Activated naive CD4-positive, alpha-beta T cell treated with anti-CD3 and anti-CD28 coated beads for 36 hours (primary cell): ENCODE measurements at regions of chr13 and their contacts with region 1.

Region 1: GRCh38 chr13:40777166-40777808 is 6.3 kb upstream of the MRPS31 start:
- DNase-seq: peak; percentile 48
- H3K4me3 Mint-ChIP-seq: peak overlapping the region; percentile 77
- H3K27ac Mint-ChIP-seq: peak overlapping the region; percentile 99
- H3K4me1 Mint-ChIP-seq: peaks cover 25% of the 10 kb centered on the region
- H3K27me3 Mint-ChIP-seq: no peaks in the 10 kb centered on the region

Region 2: GRCh38 chr13:39777527-39778061 is 999.7 kb before region 1 on chr13:
- CTCF ChIA-PET with region 1: interaction called, 3 read pairs
- intact Hi-C with region 1: loop called (anchors 2 kb)
- DNase-seq: peak; percentile 70
- H3K4me3 Mint-ChIP-seq: no peak overlapping the region
- H3K27ac Mint-ChIP-seq: peak overlapping the region; percentile 80
- H3K4me1 Mint-ChIP-seq: peaks cover 46% of the 10 kb centered on the region
- H3K27me3 Mint-ChIP-seq: no peaks in the 10 kb centered on the region

Region 3: DNA sequence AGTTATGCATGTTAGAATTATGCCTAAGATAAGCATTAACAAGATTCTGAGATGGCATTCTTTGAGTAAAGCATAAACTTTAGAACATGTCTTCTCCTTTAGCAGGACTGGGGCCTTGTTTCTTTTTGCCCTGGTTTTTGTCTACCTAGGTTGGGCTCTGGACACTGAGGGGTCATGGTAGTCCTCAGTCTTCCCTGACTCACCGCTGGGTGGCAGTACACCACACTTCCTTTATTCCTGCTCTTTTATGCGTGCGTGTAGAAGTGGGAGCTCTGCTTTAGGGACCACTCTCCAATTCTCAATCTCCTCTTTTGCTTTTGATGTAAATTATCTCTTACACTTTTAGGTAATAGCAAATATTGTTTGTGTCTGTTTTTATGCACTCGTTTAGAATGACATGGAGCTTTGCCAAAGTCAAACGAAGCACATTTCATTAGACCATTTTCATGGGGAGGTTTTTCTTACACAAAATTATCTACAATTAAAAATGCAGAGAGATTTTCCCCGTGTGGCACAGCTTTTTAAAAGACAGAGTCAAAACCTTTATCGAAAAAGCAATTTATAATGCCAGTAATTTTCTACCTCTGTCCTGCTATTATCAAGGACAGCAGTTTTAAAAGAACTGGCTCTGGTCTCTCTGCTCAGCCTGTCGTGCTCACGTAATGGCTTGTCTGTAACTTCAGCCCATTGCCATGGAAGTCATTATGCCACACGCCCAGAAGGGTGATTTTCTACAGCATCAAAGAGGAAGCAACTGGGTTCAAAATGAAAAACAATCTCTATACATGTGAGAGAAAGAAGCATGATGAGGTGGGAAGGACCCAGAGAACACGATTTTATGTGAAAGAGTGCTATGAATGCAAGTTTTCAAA is 707.9 kb before region 1 on chr13:
- CTCF ChIA-PET with region 1: interaction called, 3 read pairs
- intact Hi-C with region 1: loop called (anchors 2 kb)
- DNase-seq: peak; percentile 87
- H3K4me3 Mint-ChIP-seq: peak overlapping the region; percentile 12
- H3K27ac Mint-ChIP-seq: peak overlapping the region; percentile 27
- H3K4me1 Mint-ChIP-seq: peaks cover 29% of the 10 kb centered on the region
- H3K27me3 Mint-ChIP-seq: no peaks in the 10 kb centered on the region

Region 4: GRCh38 chr13:40200273-40200978 is 576.9 kb before region 1 on chr13:
- CTCF ChIA-PET with region 1: no interaction called
- intact Hi-C with region 1: no loop called
- DNase-seq: no peak
- H3K4me3 Mint-ChIP-seq: no peak overlapping the region
- H3K27ac Mint-ChIP-seq: peak overlapping the region; percentile 19
- H3K4me1 Mint-ChIP-seq: peaks cover 41% of the 10 kb centered on the region
- H3K27me3 Mint-ChIP-seq: no peaks in the 10 kb centered on the region

Region 5: DNA sequence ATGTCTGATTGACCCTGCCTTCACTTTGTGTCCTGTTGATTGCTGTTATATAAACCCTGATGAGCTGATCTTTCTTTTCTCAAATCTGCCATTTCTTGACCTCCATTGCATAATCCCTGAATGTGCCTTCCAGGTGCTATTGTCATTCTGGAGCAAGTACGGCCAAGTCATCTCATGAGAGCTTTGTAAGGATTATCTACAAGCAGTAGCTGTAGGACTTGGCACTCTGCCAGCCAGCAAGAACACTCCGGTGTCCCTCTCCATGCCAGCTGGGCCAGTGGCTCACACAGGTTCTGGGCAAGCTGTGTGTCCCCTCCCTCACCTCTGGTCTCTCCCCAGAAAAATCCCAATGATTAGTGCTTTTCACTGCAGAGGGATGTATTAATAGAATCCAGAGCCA is 458.9 kb before region 1 on chr13:
- CTCF ChIA-PET with region 1: no interaction called
- intact Hi-C with region 1: loop called (anchors 2 kb)
- DNase-seq: peak; percentile 23
- H3K4me3 Mint-ChIP-seq: no peak overlapping the region
- H3K27ac Mint-ChIP-seq: no peak overlapping the region
- H3K4me1 Mint-ChIP-seq: peaks cover 64% of the 10 kb centered on the region
- H3K27me3 Mint-ChIP-seq: no peaks in the 10 kb centered on the region

Region 6: GRCh38 chr13:40682449-40683240 is 94.6 kb before region 1 on chr13:
- CTCF ChIA-PET with region 1: interaction called, 11 read pairs
- intact Hi-C with region 1: loop called (anchors 5 kb)
- DNase-seq: no peak
- H3K4me3 Mint-ChIP-seq: no peak overlapping the region
- H3K27ac Mint-ChIP-seq: no peak overlapping the region
- H3K4me1 Mint-ChIP-seq: peaks cover 12% of the 10 kb centered on the region
- H3K27me3 Mint-ChIP-seq: no peaks in the 10 kb centered on the region

Region 7: DNA sequence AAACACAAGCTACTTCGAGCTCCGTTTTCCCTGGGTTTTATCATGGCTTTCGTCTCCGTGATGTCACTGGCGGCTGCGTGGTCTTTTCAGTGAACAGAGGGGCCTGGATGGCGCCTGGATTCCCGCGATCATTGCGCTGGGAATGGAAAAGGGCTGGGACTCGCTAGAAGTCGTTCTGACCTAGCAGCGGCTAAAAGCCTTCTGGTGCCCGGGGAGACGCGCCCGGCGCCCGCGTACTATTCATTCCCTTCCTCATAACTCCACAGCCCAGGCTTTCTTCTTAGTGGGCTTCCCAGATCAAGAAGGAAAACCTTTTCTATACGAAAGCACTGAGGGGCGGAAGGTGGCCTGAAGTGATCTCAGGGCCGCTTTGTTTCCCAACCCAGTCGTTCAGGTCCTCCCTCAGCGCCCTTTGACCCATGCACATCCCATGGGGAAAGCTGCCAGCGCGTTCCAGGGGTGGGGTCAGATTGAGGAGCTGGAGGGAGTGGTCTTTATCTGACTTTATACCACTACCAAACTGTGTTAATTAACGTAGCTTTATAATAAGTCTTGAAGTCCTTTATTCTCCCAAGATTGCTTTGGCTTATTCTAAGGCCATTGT is 145.3 kb after region 1 on chr13:
- CTCF ChIA-PET with region 1: interaction called, 6 read pairs
- intact Hi-C with region 1: loop called (anchors 2 kb)
- DNase-seq: no peak
- H3K4me3 Mint-ChIP-seq: peak overlapping the region; percentile 54
- H3K27ac Mint-ChIP-seq: peak overlapping the region; percentile 61
- H3K4me1 Mint-ChIP-seq: peaks cover 15% of the 10 kb centered on the region
- H3K27me3 Mint-ChIP-seq: no peaks in the 10 kb centered on the region